ENCODE measurements at regions of chr17 and their contacts with region 1.

Region 1: GRCh38 chr17:50956750-50957523 is 90.8 kb upstream of the TOB1 start:
- DNase-seq: peak; percentile 39
- H3K4me3 ChIP-seq: no peak overlapping the region
- H3K27ac ChIP-seq: no peak overlapping the region
- H3K4me1 ChIP-seq: peaks cover 41% of the 10 kb centered on the region
- H3K27me3 ChIP-seq: no peaks in the 10 kb centered on the region
- CTCF ChIP-seq: peak; percentile 79 to 87

Region 2: GRCh38 chr17:50806141-50806643 is 150.7 kb before region 1 on chr17:
- CTCF ChIA-PET with region 1: interaction called, 14 read pairs
- dilution Hi-C with region 1: no loop called
- in situ Hi-C with region 1: no loop called
- intact Hi-C with region 1: no loop called
- DNase-seq: no peak
- H3K4me3 ChIP-seq: no peak overlapping the region
- H3K27ac ChIP-seq: no peak overlapping the region
- H3K4me1 ChIP-seq: peaks cover 4% of the 10 kb centered on the region
- H3K27me3 ChIP-seq: no peaks in the 10 kb centered on the region
- CTCF ChIP-seq: no peak

Region 3: DNA sequence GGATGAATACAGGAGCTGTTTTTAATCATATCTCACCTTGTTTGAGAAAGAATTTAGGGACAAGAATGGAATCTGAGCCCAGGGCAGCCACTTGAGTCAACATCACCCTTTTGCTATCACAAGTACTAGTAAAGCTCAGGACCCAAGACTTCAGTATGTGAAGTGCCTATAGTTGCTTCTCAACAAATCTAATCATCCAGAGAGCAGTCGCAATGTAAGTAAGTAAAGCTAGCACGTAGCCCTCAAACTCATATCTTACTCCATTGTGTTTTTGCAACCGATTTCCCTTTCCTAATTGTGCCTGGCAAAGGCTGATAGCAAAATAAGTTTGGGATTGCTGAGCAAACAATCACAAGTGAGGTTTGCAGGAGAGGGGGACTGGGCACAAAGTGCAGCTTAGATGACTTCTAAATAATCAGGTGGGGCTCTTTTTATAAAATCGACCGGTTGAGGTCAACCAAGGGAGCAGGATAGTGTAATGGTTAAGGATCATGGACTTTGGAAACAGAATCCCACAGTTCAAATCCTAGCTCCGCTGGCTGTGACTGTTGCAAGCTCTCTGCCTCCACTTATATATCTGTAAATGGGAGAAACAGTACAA is 103.8 kb before region 1 on chr17:
- CTCF ChIA-PET with region 1: interaction called, 10 read pairs
- dilution Hi-C with region 1: no loop called
- in situ Hi-C with region 1: loop called in 1 of 2 experiments (anchors 5 kb)
- intact Hi-C with region 1: loop called (anchors 1 kb)
- DNase-seq: no peak
- H3K4me3 ChIP-seq: no peak overlapping the region
- H3K27ac ChIP-seq: no peak overlapping the region
- H3K4me1 ChIP-seq: peaks cover 12% of the 10 kb centered on the region
- H3K27me3 ChIP-seq: no peaks in the 10 kb centered on the region
- CTCF ChIP-seq: no peak

Measured in mammary epithelial cell (primary cell).